Activated CD8-positive, alpha-beta T cell treated with anti-CD3 and anti-CD28 coated beads for 36 hours (primary cell): ENCODE measurements at regions of chr20 and their contacts with region 1.

Region 1: GRCh38 chr20:14355791-14356190 is 18.4 kb upstream of the FLRT3 start:
- DNase-seq: no peak
- ATAC-seq: no peak
- H3K4me3 Mint-ChIP-seq: no peak overlapping the region
- H3K27ac Mint-ChIP-seq: no peak overlapping the region
- H3K4me1 Mint-ChIP-seq: no peaks in the 10 kb centered on the region
- H3K27me3 Mint-ChIP-seq: no peaks in the 10 kb centered on the region
- CTCF ChIP-seq: no peak

Region 2: DNA sequence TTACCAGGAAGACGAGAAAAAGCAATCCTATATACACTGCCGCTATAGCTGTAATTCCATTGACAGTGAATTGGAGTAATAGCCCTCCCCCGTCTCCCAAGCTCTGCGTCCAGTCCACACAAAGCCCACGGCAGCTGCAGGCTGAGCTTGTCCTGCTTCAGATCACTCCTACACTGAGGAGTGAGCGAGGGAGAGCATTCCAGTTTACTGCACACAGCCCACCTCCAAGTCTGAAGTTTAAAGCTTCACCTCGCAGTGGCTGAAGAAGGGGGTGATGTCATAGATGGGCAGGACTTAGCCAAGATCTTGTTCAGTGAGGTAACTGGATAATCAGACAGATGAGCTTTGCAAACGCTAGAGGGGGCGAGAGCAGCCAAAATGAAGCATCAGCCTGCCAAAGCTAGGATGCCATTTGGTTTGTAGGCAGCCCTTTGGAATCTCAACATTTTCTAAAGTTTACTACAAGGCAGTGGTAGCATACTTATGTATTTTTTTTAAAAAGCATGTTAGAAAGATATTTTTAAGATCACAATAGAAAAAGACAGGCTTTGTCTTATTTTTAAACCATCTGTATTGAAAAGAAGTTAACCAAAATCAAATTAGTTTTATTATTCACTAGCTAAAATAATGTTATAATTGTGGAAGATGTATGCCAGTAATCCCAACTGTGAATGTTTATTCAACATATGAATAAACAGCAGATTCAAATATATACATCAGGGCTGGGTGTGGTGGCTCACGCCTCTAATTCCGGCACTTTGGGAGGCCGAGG is 18.2 kb before region 1 on chr20 and contains the start of gene FLRT3:
- CTCF ChIA-PET with region 1: no interaction called
- POLR2A ChIA-PET with region 1: no interaction called
- intact Hi-C with region 1: loop called (anchors 2 kb)
- DNase-seq: peak; percentile 36
- ATAC-seq: peak; percentile 42
- H3K4me3 Mint-ChIP-seq: no peak within 1 kb of the TSS
- H3K27ac Mint-ChIP-seq: no peak within 1 kb of the TSS
- H3K4me1 Mint-ChIP-seq: no peaks in the 10 kb centered on the region
- H3K27me3 Mint-ChIP-seq: no peaks in the 10 kb centered on the region
- CTCF ChIP-seq: peak; percentile 25
- total RNA-seq, gene FLRT3: not detected

Region 3: DNA sequence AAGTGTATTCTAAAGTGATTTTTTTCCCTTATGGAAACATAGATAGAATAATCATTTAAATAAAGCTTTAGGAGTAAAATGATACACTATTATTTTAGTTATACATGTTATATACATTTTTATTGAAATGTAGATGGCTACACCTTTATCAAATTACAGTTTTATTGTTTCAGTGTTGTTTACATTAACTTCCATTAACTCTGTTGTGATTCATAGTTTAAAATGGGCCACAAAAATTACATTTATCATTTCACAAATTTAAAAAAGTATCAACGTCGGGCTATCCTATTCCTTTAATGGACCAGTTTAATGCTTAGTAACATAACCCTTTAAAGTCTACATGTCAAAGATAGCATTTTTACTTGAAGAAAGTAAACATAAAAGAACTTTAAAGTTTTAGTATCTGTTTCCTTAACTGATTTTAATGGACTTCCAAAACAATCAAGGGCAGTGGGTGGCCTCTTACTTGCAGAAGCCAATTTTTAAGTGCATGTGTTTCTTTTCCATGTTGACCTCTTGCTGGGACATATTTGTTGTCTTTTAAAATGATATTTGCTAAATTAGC is 29.5 kb after region 1 on chr20:
- CTCF ChIA-PET with region 1: no interaction called
- POLR2A ChIA-PET with region 1: no interaction called
- intact Hi-C with region 1: no loop called
- DNase-seq: no peak
- ATAC-seq: no peak
- H3K4me3 Mint-ChIP-seq: no peak overlapping the region
- H3K27ac Mint-ChIP-seq: no peak overlapping the region
- H3K4me1 Mint-ChIP-seq: no peaks in the 10 kb centered on the region
- H3K27me3 Mint-ChIP-seq: no peaks in the 10 kb centered on the region
- CTCF ChIP-seq: no peak